ENCODE measurements at regions of chr3 and their contacts with region 1.

Region 1: GRCh38 chr3:171187706-171188290 is 161.3 kb upstream of the SLC2A2 start:
- DNase-seq: peak in 1 of 2 donors; percentile 15
- ATAC-seq: peak in 7 of 8 donors; percentile 54 to 76 (median 68)
- H3K4me3 ChIP-seq: no peak overlapping the region
- H3K27ac ChIP-seq: peak overlapping the region in 1 of 10 donors; percentile 9
- H3K4me1 ChIP-seq: peaks cover 2 to 42% (median 26%) of the 10 kb centered on the region in 9 donors
- H3K27me3 ChIP-seq: no peaks in the 10 kb centered on the region
- CTCF ChIP-seq: peak; percentile 31 to 70 (median 63)

Region 2: DNA sequence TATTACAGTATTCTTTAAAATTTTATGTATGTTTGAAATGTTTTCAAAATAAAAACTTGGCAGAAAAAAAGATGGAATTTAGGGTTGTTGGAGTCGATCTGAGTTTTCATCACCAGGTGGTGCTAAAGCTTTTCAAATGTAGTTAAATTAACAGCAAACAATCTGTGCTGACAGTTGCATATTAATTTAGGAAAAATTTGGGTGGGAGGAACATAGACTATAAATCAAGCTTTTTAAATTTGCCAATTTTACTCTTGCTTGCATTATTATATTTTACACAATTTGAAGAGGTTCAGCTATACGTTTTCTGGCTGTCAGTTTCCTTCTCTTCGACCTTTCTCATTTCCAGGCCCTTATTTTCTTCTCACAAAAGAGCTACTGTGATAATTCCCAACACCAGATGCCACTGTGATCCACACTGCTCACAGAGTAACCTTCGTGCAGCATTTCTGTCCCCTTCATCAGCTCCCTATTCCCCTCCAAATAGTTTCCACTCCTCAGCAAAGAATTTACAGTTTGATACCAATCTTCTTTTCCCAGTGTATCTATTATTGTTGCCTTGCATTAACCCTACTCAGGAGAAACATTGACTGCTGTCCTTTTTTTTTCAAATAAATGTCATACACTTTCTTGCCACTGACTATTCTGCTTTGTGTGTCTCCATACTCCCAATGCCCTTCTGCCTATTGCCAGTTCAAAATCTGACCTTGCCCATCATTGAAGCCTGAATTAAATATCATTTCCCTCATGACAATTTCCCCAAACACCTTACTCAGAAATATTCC is 226.0 kb before region 1 on chr3:
- intact Hi-C with region 1: loop called in 1 of 10 experiments (anchors 10 kb)
- DNase-seq: no peak
- ATAC-seq: peak in 3 of 8 donors; percentile 44 to 65 (median 52)
- H3K4me3 ChIP-seq: no peak overlapping the region
- H3K27ac ChIP-seq: no peak overlapping the region
- H3K4me1 ChIP-seq: peaks cover 0 to 12% (median 0%) of the 10 kb centered on the region in 9 donors
- H3K27me3 ChIP-seq: no peaks in the 10 kb centered on the region
- CTCF ChIP-seq: peak; percentile 53 to 75 (median 63)

Region 3: GRCh38 chr3:171293142-171293782 is 105.5 kb after region 1 on chr3:
- intact Hi-C with region 1: loop called in 1 of 10 experiments (anchors 10 kb)
- DNase-seq: no peak
- ATAC-seq: no peak
- H3K4me3 ChIP-seq: no peak overlapping the region
- H3K27ac ChIP-seq: peak overlapping the region in 2 of 10 donors; percentile 51 to 87
- H3K4me1 ChIP-seq: peaks cover 0 to 47% (median 29%) of the 10 kb centered on the region in 9 donors
- H3K27me3 ChIP-seq: no peaks in the 10 kb centered on the region
- CTCF ChIP-seq: no peak

Region 4: DNA sequence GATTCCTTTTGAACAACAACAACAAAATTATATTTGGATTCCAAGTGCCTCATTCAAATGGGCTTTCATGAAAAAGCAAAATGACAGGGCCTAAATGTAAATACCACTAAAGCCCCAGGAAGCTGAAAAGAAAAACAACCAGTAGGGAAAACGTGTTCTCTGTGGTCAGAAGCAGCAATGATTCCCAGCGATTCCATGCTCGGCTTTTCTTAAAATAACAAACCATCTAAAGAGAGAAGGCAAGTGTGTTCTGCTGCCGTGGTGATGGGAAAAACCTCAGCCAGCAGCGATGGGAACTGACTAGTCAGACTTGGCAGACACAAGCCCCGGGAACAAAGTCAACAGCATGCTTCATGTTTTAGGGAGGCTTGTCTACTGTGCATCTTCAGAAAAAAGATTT is 118.8 kb after region 1 on chr3:
- intact Hi-C with region 1: loop called in 6 of 10 experiments (anchors 10 kb)
- DNase-seq: peak; percentile 59 to 86
- ATAC-seq: peak; percentile 88 to 94 (median 92)
- H3K4me3 ChIP-seq: peak overlapping the region in 5 of 10 donors; percentile 9 to 23 (median 15)
- H3K27ac ChIP-seq: peak overlapping the region; percentile 47 to 90 (median 74)
- H3K4me1 ChIP-seq: peaks cover 0 to 39% (median 21%) of the 10 kb centered on the region in 9 donors
- H3K27me3 ChIP-seq: no peaks in the 10 kb centered on the region
- CTCF ChIP-seq: no peak

Region 5: DNA sequence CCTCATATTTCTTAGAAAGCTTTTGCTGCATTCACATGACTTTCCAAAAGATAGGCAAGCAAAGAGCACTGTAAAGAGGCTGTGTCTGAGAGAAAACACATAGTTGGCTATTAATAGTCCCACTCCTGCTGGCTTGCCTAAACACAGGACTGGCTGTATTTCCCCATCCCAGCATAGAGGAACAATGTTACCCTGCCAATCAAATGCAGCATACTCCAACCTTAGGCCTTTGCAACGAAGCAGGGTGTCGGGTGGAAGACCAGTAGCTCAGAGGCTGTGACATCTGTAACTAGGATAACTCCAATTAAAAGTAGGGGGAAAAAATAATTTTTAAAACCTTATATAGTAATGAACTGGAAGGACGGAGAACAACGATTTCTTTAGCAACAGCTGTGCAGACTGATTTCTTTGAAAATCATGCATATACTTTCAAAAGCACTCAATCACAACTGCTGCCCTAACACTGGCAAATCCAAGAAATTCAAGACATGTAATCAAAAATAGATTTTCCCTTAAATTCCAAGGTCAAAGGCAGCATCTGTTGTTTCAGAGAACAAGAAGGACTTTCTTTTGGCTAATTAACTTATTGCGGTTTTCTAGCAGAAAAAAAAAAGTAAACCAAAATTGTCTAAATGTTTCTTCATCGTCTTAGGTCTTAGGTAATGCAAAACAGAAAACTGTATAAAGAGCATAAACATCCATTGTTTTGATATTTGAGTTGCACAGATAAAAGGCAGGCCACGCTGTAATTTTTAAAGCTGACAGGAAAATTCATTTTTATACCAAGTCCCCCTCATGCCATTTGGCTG is 133.2 kb after region 1 on chr3:
- intact Hi-C with region 1: loop called in 6 of 10 experiments (anchors 5 to 10 kb)
- DNase-seq: peak in 1 of 2 donors; percentile 58
- ATAC-seq: peak; percentile 85 to 97 (median 94)
- H3K4me3 ChIP-seq: peak overlapping the region in 2 of 10 donors; percentile 3
- H3K27ac ChIP-seq: peak overlapping the region in 6 of 10 donors; percentile 38 to 69 (median 58)
- H3K4me1 ChIP-seq: peaks cover 0 to 60% (median 37%) of the 10 kb centered on the region in 9 donors
- H3K27me3 ChIP-seq: no peaks in the 10 kb centered on the region
- CTCF ChIP-seq: no peak

Region 6: DNA sequence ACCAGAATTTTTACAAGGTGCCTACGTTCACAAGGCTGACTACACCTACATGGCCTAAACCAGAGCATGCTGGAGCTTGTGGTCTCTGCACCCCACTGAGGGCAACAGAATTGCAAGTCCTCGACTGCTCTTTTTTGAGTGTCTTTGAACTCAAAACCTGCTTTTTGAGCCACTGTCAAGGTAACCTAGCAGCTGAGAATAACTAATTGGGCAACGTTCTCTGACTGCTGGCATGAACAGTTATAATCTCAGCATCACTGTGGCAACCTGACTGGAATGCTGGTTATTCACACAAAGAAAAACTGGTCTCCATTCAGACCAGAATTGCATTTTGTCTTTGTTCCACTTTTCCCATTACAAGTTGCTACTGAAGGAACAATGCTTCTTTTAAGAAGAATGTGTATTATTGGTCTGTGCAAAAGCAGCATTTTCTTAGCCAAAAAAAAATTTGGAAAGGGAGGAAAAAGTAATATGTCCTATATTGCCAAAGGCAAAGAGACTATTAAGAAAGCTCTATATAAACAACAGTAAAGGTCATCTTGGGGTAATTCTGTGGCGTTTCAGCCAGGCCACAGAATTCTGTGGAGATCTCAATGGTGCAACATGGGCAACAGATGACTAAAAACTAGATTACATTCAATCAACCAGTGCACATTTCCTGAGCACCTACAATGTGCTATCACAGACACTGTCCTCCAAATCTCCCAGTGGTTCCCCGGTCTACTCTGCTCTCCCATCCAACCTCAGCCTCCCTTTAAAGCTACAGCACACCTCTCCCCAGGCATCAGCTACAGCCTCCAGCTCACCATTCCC is 195.6 kb after region 1 on chr3:
- intact Hi-C with region 1: loop called in 1 of 10 experiments (anchors 10 kb)
- DNase-seq: no peak
- ATAC-seq: no peak
- H3K4me3 ChIP-seq: no peak overlapping the region
- H3K27ac ChIP-seq: no peak overlapping the region
- H3K4me1 ChIP-seq: peaks cover 0 to 62% (median 22%) of the 10 kb centered on the region in 9 donors
- H3K27me3 ChIP-seq: no peaks in the 10 kb centered on the region
- CTCF ChIP-seq: no peak

Region 7: DNA sequence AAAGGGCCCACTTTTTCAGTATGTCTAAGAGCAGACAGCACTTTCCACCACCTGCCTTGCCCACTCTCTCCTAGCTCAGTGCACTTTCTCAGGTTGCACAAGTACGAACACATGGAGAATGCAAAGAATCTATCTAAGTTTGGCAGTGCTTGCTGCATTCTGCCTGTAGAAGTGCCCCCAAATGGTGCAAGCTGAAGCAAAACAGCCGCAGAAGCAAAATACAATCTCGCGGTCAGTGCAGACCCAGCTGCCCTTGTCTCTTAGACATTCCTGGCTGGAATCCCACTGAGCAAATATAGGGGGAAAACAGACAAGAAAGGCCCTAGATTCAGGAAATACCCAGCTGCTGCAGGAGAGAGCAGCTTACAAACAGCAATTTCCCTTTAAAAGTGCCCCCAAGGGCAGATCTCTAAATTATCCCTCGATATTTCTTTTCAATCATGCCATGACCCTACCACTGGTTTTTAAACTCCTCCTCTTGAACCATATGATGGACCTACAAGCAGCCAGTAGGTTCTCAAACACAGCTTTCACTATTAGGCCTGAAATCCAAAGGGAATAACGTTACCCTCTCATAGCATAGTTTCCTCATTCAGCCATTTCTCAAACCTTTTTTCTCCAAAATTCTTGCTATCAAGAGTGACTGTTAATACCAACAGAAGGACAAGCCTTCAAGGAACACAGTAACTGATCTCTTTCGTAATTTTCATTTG is 205.4 kb after region 1 on chr3:
- intact Hi-C with region 1: loop called in 2 of 10 experiments (anchors 10 kb)
- DNase-seq: no peak
- ATAC-seq: peak in 4 of 8 donors; percentile 21 to 29 (median 27)
- H3K4me3 ChIP-seq: no peak overlapping the region
- H3K27ac ChIP-seq: peak overlapping the region in 8 of 10 donors; percentile 35 to 79 (median 54)
- H3K4me1 ChIP-seq: peaks cover 5 to 52% (median 23%) of the 10 kb centered on the region in 9 donors
- H3K27me3 ChIP-seq: no peaks in the 10 kb centered on the region
- CTCF ChIP-seq: no peak

Region 8: DNA sequence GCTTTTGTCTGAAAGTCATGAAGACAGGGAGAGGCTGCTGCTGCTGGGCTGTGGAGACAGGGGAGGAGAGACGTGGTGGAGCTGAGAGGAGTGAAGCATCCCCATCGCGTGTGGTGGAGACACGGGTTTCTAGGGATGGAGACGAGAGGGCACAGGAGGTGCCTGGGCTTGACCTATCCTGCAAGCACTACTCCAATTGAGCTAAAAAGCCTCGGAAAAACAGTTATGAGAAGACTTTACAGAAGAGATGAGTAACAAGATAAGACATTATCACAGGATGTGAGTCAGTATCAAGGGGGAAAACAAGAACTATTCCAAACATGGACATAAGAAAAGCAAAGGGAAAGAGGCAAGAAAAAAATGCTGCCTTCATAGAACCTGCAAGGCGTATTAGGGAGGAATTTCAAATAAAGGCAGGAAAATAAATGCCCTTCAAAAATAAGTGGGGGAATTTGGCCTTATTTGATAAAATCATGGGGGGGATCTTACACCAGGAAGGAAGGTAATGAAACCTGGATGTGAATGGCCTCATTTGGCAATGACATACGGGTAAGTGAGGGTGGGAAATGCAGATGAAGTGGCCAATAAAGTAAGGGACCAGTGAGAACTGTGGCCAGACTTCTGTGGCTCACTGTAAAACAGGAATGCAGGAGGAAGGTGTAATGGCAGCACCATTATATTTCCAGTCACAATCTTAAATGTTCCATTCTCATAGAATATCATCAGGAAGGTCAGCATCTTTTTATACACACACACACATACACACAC is 524.6 kb after region 1 on chr3:
- intact Hi-C with region 1: no loop called
- DNase-seq: no peak
- ATAC-seq: peak in 1 of 8 donors; percentile 55
- H3K4me3 ChIP-seq: no peak overlapping the region
- H3K27ac ChIP-seq: peak overlapping the region in 2 of 10 donors; percentile 24 to 33
- H3K4me1 ChIP-seq: peaks cover 0 to 8% (median 0%) of the 10 kb centered on the region in 9 donors
- H3K27me3 ChIP-seq: no peaks in the 10 kb centered on the region
- CTCF ChIP-seq: no peak